Activated B cell treated with CpG ODN at 0.5 μM for 24 hours (primary cell): ENCODE measurements at regions of chr14 and their contacts with region 1.

Region 1: GRCh38 chr14:89650077-89650978 is 233.3 kb upstream of the FOXN3 start:
- DNase-seq: no peak
- ATAC-seq: peak; percentile 60
- H3K4me3 Mint-ChIP-seq: peak overlapping the region; percentile 3
- H3K27ac Mint-ChIP-seq: peak overlapping the region; percentile 37
- H3K4me1 Mint-ChIP-seq: peaks cover 22% of the 10 kb centered on the region
- H3K27me3 Mint-ChIP-seq: no peaks in the 10 kb centered on the region
- CTCF ChIP-seq: no peak

Region 2: GRCh38 chr14:89237921-89238529 is 412.3 kb before region 1 on chr14:
- CTCF ChIA-PET with region 1: no interaction called
- POLR2A ChIA-PET with region 1: no interaction called
- intact Hi-C with region 1: no loop called
- DNase-seq: no peak
- ATAC-seq: no peak
- H3K4me3 Mint-ChIP-seq: no peak overlapping the region
- H3K27ac Mint-ChIP-seq: no peak overlapping the region
- H3K4me1 Mint-ChIP-seq: peaks cover 46% of the 10 kb centered on the region
- H3K27me3 Mint-ChIP-seq: no peaks in the 10 kb centered on the region
- CTCF ChIP-seq: no peak

Region 3: GRCh38 chr14:89690139-89690538 is 39.8 kb after region 1 on chr14:
- CTCF ChIA-PET with region 1: no interaction called
- POLR2A ChIA-PET with region 1: interaction called, 12 read pairs
- intact Hi-C with region 1: no loop called
- DNase-seq: no peak
- ATAC-seq: no peak
- H3K4me3 Mint-ChIP-seq: no peak overlapping the region
- H3K27ac Mint-ChIP-seq: no peak overlapping the region
- H3K4me1 Mint-ChIP-seq: no peaks in the 10 kb centered on the region
- H3K27me3 Mint-ChIP-seq: no peaks in the 10 kb centered on the region
- CTCF ChIP-seq: no peak